ENCODE measurements at regions of chr13 and their contacts with region 1.

Region 1: DNA sequence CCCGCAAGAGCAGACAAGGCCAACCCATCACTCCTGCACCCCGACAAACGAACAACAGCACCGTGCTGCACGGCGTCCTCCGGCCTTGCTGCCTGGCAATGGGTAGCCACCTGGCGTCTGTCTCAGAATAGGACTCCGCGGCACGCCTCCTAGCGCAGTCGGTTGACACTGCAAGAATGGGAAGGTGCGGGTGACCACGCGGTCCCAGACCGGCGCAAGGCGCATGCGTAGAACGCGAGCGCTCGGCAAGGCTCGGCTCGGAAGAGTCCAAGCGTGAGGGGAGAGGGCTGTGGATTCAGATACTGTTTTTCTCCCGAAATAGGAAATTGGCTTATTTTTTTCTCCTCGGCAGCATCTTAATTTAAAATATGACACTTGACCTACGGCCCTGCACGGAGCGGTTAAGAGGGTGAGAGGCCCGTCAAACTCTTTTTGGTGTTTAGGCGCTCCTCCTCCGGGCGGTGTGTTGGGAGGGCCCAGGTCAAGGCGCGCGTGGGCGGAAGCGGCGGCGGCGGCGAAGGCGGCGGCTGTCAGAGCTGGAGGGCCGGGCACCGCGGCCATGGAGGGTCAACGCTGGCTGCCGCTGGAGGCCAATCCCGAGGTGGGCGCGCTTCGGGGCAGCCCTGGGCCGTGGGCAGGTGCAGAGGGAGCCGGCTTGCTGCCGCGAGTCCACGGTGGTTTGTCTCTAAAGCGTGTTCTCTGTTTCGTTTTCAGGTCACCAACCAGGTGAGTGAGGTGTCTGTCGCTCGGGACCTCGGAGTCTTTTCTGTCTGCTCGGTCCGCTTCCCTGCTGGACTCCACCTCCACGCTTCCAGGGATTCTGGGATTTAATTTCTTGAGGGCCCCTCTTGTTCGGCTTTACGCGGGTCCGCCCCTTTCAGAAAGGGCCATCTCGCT is at the start of gene UCHL3:
- DNase-seq: peak; percentile 95 to 99 (median 97)
- ATAC-seq: peak; percentile 93
- H3K4me3 ChIP-seq: peak within 1 kb of the TSS; percentile 93
- H3K4me3 Mint-ChIP-seq: peak within 1 kb of the TSS; percentile 97
- H3K27ac ChIP-seq: peak within 1 kb of the TSS; percentile 76 to 91
- H3K27ac Mint-ChIP-seq: peak within 1 kb of the TSS; percentile 89
- H3K4me1 ChIP-seq: peaks cover 18% of the 10 kb centered on the region
- H3K4me1 Mint-ChIP-seq: peaks cover 47% of the 10 kb centered on the region
- H3K27me3 ChIP-seq: no peaks in the 10 kb centered on the region
- H3K27me3 Mint-ChIP-seq: no peaks in the 10 kb centered on the region
- CTCF ChIP-seq: peak; percentile 96
- total RNA-seq, gene UCHL3: 16.0 to 17.7 TPM

Region 2: DNA sequence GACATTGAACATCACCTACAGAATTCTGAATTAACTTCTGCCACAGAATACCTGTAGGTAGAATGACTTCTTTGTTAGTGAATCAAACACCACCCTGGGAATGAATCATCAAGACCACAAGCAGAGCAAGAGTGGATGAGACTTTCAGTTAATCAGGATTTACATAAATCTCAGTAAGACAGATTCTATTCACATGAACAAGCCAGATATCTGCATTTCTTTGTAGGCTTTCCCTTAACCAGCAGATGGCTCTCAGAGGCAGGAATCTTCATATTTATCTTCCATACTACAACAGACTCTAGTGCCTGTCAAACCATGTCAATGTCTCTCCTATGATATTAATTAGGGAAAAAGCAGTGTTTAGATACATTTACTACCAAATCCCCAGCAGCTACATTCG is 1827.4 kb before region 1 on chr13:
- CTCF ChIA-PET with region 1: no interaction called
- POLR2A ChIA-PET with region 1: no interaction called
- intact Hi-C with region 1: loop called in 1 of 2 experiments (anchors 10 kb)
- DNase-seq: peak in 3 of 14 experiments; percentile 35 to 52 (median 46)
- ATAC-seq: peak; percentile 71
- H3K4me3 ChIP-seq: no peak overlapping the region
- H3K4me3 Mint-ChIP-seq: no peak overlapping the region
- H3K27ac ChIP-seq: peak overlapping the region in 1 of 2 donors; percentile 10
- H3K27ac Mint-ChIP-seq: peak overlapping the region; percentile 51
- H3K4me1 ChIP-seq: peaks cover 15% of the 10 kb centered on the region
- H3K4me1 Mint-ChIP-seq: peaks cover 62% of the 10 kb centered on the region
- H3K27me3 ChIP-seq: no peaks in the 10 kb centered on the region
- H3K27me3 Mint-ChIP-seq: no peaks in the 10 kb centered on the region
- CTCF ChIP-seq: peak; percentile 14

Region 3: DNA sequence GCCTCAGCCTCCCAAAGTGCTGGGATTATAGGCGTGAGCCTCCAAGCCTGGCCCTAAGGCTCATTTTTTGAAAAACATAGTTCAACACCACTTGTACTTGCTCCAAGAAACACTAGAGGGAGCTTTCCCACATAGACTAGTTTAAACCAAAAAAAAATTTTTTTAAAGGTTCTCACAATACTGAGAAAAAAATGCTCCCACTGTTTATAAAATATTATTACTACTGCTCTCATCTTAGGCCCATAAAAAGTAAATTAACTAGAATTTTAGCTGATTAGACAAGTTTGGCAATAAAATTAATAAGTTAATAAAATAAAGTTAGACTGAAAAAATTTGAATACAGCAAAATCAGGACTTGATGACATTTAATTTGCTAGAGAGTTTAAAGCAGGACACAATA is 177.0 kb before region 1 on chr13:
- CTCF ChIA-PET with region 1: no interaction called
- POLR2A ChIA-PET with region 1: no interaction called
- intact Hi-C with region 1: loop called (anchors 2 kb)
- DNase-seq: peak in 3 of 14 experiments; percentile 53 to 63 (median 58)
- ATAC-seq: peak; percentile 85
- H3K4me3 ChIP-seq: no peak overlapping the region
- H3K4me3 Mint-ChIP-seq: no peak overlapping the region
- H3K27ac ChIP-seq: no peak overlapping the region
- H3K27ac Mint-ChIP-seq: no peak overlapping the region
- H3K4me1 ChIP-seq: no peaks in the 10 kb centered on the region
- H3K4me1 Mint-ChIP-seq: no peaks in the 10 kb centered on the region
- H3K27me3 ChIP-seq: no peaks in the 10 kb centered on the region
- H3K27me3 Mint-ChIP-seq: no peaks in the 10 kb centered on the region
- CTCF ChIP-seq: peak; percentile 84

Region 4: DNA sequence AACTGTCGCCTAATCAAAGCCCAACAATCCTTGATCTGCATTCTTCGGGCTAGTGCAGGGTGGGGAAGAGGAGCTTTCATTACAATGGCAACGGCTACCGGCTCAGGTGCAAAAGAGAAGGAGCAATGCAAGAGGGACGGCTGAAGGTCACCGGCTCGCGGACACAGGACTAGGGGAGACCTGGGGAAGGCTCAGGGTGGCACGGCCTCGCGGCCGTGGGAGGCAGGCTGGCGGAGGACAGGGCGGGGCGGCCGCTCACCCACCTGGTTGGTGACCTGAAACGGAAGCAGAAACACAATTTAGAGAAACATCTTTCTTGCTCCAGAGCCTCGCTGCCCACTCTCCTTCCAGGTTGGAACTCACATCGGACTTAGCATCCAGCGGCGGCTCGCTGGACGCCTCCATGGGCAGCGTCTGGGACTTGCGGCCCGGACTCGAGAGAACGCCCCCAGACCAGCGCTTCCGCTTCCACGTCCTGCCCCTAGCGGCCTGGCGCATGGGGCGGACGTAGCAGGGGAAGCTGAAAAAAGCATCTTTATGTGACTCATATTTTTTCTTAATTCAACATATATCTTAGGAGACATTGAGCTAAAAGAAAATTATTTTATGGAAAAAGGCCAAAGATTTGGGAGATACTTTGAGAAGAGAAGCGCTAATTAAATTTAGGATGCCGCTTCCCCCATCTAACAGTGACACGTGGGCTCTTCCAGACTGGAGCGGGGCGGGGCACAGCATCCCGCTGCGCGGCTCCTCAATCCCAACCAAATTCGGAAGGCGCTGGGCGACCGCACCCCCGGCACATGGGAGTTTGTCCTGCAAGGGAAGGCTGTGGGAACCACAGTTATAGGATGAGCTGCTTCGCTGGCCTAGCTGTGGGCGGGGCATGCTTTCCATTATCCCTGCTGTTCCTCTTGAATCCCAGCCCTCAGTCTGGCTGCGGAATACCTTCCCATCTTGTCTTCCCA is 11.8 kb before region 1 on chr13 and contains the start of gene COMMD6:
- CTCF ChIA-PET with region 1: interaction called, 3 read pairs
- POLR2A ChIA-PET with region 1: interaction called, 22 read pairs
- intact Hi-C with region 1: loop called (anchors 1 kb)
- DNase-seq: peak; percentile 40 to 84 (median 57)
- ATAC-seq: peak; percentile 92
- H3K4me3 ChIP-seq: peak within 1 kb of the TSS; percentile 67
- H3K4me3 Mint-ChIP-seq: peak within 1 kb of the TSS; percentile 99
- H3K27ac ChIP-seq: peak within 1 kb of the TSS; percentile 4 to 70
- H3K27ac Mint-ChIP-seq: peak within 1 kb of the TSS; percentile 89
- H3K4me1 ChIP-seq: peaks cover 27% of the 10 kb centered on the region
- H3K4me1 Mint-ChIP-seq: peaks cover 55% of the 10 kb centered on the region
- H3K27me3 ChIP-seq: no peaks in the 10 kb centered on the region
- H3K27me3 Mint-ChIP-seq: no peaks in the 10 kb centered on the region
- CTCF ChIP-seq: no peak
- total RNA-seq, gene COMMD6: 211 to 217 TPM

Region 5: GRCh38 chr13:75566658-75567057 is 17.1 kb after region 1 on chr13:
- CTCF ChIA-PET with region 1: no interaction called
- POLR2A ChIA-PET with region 1: no interaction called
- intact Hi-C with region 1: no loop called
- DNase-seq: no peak
- ATAC-seq: no peak
- H3K4me3 ChIP-seq: no peak overlapping the region
- H3K4me3 Mint-ChIP-seq: no peak overlapping the region
- H3K27ac ChIP-seq: no peak overlapping the region
- H3K27ac Mint-ChIP-seq: no peak overlapping the region
- H3K4me1 ChIP-seq: no peaks in the 10 kb centered on the region
- H3K4me1 Mint-ChIP-seq: no peaks in the 10 kb centered on the region
- H3K27me3 ChIP-seq: no peaks in the 10 kb centered on the region
- H3K27me3 Mint-ChIP-seq: no peaks in the 10 kb centered on the region
- CTCF ChIP-seq: no peak

Region 6: DNA sequence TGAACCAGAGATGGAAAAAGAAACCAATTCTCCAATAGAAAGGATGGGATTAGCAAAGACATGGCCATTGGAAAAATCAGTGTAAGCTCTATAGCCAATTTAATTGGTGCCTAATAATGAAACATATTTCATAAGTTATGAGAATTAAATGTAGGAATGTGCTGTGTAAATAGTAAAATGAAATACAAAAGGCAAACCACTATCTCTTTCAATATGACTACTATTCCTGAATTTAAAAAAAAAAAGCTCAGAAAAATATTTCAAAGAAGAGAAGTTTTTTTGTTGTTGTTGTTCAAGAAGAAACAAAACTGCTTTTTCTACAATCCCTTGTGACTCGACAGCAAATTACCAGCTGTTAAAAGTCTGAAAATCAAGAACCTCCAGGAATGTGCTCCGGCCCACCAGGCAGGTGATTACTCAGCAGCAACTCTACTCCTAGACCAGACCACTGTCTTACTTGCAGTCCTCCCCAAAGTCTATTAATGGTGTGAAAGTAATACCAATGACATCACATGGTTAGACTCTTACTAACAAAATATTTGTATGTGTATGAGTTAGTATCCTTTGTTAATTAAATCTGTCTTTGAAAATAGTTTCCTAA is 974.3 kb after region 1 on chr13:
- CTCF ChIA-PET with region 1: no interaction called
- POLR2A ChIA-PET with region 1: no interaction called
- intact Hi-C with region 1: no loop called
- DNase-seq: no peak
- ATAC-seq: no peak
- H3K4me3 ChIP-seq: no peak overlapping the region
- H3K4me3 Mint-ChIP-seq: no peak overlapping the region
- H3K27ac ChIP-seq: no peak overlapping the region
- H3K27ac Mint-ChIP-seq: no peak overlapping the region
- H3K4me1 ChIP-seq: no peaks in the 10 kb centered on the region
- H3K4me1 Mint-ChIP-seq: no peaks in the 10 kb centered on the region
- H3K27me3 ChIP-seq: peaks cover 0 to 5% of the 10 kb centered on the region in 2 experiments
- H3K27me3 Mint-ChIP-seq: peaks cover 4% of the 10 kb centered on the region
- CTCF ChIP-seq: no peak

Region 7: DNA sequence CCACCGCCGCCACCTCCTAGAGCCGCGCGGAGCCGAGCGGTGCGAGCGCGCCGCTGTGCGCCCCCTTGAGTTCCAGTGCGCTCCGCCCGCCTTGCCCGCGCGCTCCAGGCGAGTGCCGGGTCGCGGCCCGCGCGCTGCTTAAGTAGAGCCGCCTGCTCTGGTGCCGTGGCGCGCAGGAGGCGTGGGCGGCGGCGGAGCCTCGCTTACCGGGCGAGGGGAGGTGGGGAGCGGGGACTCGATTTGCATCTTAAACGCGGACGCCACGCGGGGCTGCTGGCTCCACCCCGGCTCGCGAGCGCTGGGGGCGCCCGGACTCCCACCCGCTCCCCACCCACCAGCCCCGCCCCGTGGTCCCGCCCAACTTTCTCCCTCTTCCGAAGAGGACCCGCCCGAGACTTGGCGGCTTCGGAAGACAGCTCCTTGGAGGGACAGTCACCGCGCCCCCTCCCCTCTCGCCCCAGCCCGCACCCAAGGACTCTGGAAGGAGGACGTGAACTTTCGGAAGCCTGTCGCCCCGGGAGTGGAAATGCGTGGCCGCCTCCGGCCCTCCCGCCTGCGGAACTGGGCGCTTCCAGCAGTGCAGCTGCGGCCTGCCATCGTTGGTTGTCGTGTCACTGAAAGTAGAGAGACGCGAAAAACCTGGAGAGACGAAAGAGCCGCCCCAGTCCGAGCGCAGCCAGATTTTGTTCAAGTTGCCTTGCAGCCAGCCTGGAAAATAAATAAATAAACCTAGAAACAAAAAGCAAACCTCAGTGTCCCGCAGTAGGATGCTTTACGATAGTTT is 1337.0 kb after region 1 on chr13 and contains the start of gene KCTD12:
- CTCF ChIA-PET with region 1: no interaction called
- POLR2A ChIA-PET with region 1: no interaction called
- intact Hi-C with region 1: loop called in 1 of 2 experiments (anchors 10 kb)
- DNase-seq: peak; percentile 54 to 91 (median 72)
- ATAC-seq: peak; percentile 76
- H3K4me3 ChIP-seq: peak within 1 kb of the TSS; percentile 85
- H3K4me3 Mint-ChIP-seq: peak within 1 kb of the TSS; percentile 91
- H3K27ac ChIP-seq: peak within 1 kb of the TSS in 1 of 2 donors; percentile 24
- H3K27ac Mint-ChIP-seq: peak within 1 kb of the TSS; percentile 82
- H3K4me1 ChIP-seq: peaks cover 28% of the 10 kb centered on the region
- H3K4me1 Mint-ChIP-seq: peaks cover 38% of the 10 kb centered on the region
- H3K27me3 ChIP-seq: peaks cover 0 to 3% of the 10 kb centered on the region in 2 experiments
- H3K27me3 Mint-ChIP-seq: peaks cover 7% of the 10 kb centered on the region
- CTCF ChIP-seq: no peak
- total RNA-seq, gene KCTD12: 4.8 to 4.9 TPM

Measured in CD4-positive, alpha-beta T cell (primary cell).